CD4-positive, alpha-beta memory T cell (primary cell): ENCODE measurements at regions of chr2 and their contacts with region 1.

Region 1: GRCh38 chr2:143162123-143162837 is 33.1 kb downstream of the ARHGAP15 start:
- DNase-seq: peak; percentile 62 to 78 (median 71)
- H3K4me3 ChIP-seq: no peak overlapping the region
- H3K4me3 Mint-ChIP-seq: peak overlapping the region in 4 of 8 donors; percentile 1 to 27 (median 6)
- H3K27ac ChIP-seq: no peak overlapping the region
- H3K27ac Mint-ChIP-seq: peak overlapping the region; percentile 30 to 90 (median 78)
- H3K4me1 ChIP-seq: peaks cover 83% of the 10 kb centered on the region
- H3K4me1 Mint-ChIP-seq: peaks cover 70 to 92% (median 82%) of the 10 kb centered on the region in 4 donors
- H3K27me3 ChIP-seq: no peaks in the 10 kb centered on the region
- H3K27me3 Mint-ChIP-seq: no peaks in the 10 kb centered on the region

Region 2: GRCh38 chr2:142339261-142339660 is 823.0 kb before region 1 on chr2:
- CTCF ChIA-PET with region 1: no interaction called
- POLR2A ChIA-PET with region 1: no interaction called
- intact Hi-C with region 1: no loop called
- DNase-seq: no peak
- H3K4me3 ChIP-seq: no peak overlapping the region
- H3K4me3 Mint-ChIP-seq: no peak overlapping the region
- H3K27ac ChIP-seq: no peak overlapping the region
- H3K27ac Mint-ChIP-seq: no peak overlapping the region
- H3K4me1 ChIP-seq: no peaks in the 10 kb centered on the region
- H3K4me1 Mint-ChIP-seq: no peaks in the 10 kb centered on the region
- H3K27me3 ChIP-seq: no peaks in the 10 kb centered on the region
- H3K27me3 Mint-ChIP-seq: no peaks in the 10 kb centered on the region

Region 3: GRCh38 chr2:142903780-142904179 is 258.5 kb before region 1 on chr2:
- CTCF ChIA-PET with region 1: no interaction called
- POLR2A ChIA-PET with region 1: no interaction called
- intact Hi-C with region 1: no loop called
- DNase-seq: no peak
- H3K4me3 ChIP-seq: no peak overlapping the region
- H3K4me3 Mint-ChIP-seq: no peak overlapping the region
- H3K27ac ChIP-seq: no peak overlapping the region
- H3K27ac Mint-ChIP-seq: no peak overlapping the region
- H3K4me1 ChIP-seq: no peaks in the 10 kb centered on the region
- H3K4me1 Mint-ChIP-seq: no peaks in the 10 kb centered on the region
- H3K27me3 ChIP-seq: no peaks in the 10 kb centered on the region
- H3K27me3 Mint-ChIP-seq: peaks cover 1 to 4% of the 10 kb centered on the region in 2 donors

Region 4: GRCh38 chr2:142946941-142947340 is 215.3 kb before region 1 on chr2:
- CTCF ChIA-PET with region 1: no interaction called
- POLR2A ChIA-PET with region 1: no interaction called
- intact Hi-C with region 1: no loop called
- DNase-seq: no peak
- H3K4me3 ChIP-seq: no peak overlapping the region
- H3K4me3 Mint-ChIP-seq: no peak overlapping the region
- H3K27ac ChIP-seq: no peak overlapping the region
- H3K27ac Mint-ChIP-seq: no peak overlapping the region
- H3K4me1 ChIP-seq: no peaks in the 10 kb centered on the region
- H3K4me1 Mint-ChIP-seq: no peaks in the 10 kb centered on the region
- H3K27me3 ChIP-seq: no peaks in the 10 kb centered on the region
- H3K27me3 Mint-ChIP-seq: peaks cover 7 to 8% of the 10 kb centered on the region in 2 donors

Region 5: DNA sequence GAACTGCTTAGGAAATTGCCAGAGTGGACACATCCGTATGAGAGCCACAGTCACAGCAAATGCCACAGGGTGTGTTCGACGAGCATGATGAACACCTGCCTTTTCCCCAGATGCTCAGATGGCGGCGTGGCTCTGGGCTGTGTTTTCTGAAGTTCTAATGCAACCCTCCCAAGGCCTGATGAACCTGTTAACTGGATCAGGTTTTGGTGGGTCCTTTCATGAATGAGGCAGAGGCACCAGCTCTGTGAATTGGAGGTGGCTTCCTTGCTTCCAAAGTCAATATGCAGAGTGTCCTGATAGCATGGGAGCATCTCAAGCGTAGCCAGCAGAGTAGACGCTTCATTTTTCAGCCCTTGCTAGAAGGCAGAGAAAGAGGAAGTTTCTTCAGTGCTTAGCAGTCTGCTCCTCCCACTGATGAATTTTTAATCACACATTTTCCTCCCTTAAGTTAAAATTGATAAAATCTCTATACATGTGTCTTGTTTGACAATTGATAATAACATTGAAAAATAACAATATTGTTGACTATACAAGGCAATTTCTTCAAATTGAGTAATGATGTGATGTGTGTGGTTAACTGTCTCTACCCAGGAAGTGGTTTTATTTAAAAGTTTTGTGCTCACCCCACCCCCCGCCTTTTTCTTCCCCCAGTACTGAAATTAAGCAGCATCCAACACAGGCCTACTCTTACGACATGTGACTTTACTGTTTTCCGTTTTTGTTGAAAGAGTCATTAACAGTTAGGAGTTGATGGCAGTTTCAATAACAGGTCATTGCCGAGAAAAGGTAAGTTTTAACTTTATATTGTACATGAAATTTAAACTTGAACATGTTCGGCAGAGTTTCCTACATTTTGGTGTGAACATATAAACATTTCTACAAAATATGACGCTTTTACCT is 33.3 kb before region 1 on chr2 and contains the start of gene ARHGAP15:
- CTCF ChIA-PET with region 1: interaction called, 33 read pairs
- POLR2A ChIA-PET with region 1: interaction called, 17 read pairs
- intact Hi-C with region 1: loop called (anchors 1 kb)
- DNase-seq: peak; percentile 80 to 90 (median 84)
- H3K4me3 ChIP-seq: peak within 1 kb of the TSS; percentile 64 to 87
- H3K4me3 Mint-ChIP-seq: peak within 1 kb of the TSS; percentile 79 to 92 (median 89)
- H3K27ac ChIP-seq: peak within 1 kb of the TSS; percentile 70
- H3K27ac Mint-ChIP-seq: peak within 1 kb of the TSS; percentile 73 to 98 (median 96)
- H3K4me1 ChIP-seq: peaks cover 76% of the 10 kb centered on the region
- H3K4me1 Mint-ChIP-seq: peaks cover 31 to 42% (median 34%) of the 10 kb centered on the region in 4 donors
- H3K27me3 ChIP-seq: no peaks in the 10 kb centered on the region
- H3K27me3 Mint-ChIP-seq: no peaks in the 10 kb centered on the region
- total RNA-seq, gene ARHGAP15: 218 to 225 TPM

Region 6: GRCh38 chr2:143150287-143150686 is 12.0 kb before region 1 on chr2:
- CTCF ChIA-PET with region 1: interaction called, 38 read pairs
- POLR2A ChIA-PET with region 1: interaction called, 5 read pairs
- intact Hi-C with region 1: no loop called
- DNase-seq: no peak
- H3K4me3 ChIP-seq: no peak overlapping the region
- H3K4me3 Mint-ChIP-seq: peak overlapping the region in 7 of 8 donors; percentile 39 to 78 (median 66)
- H3K27ac ChIP-seq: peak overlapping the region; percentile 45
- H3K27ac Mint-ChIP-seq: peak overlapping the region; percentile 57 to 94 (median 88)
- H3K4me1 ChIP-seq: peaks cover 93% of the 10 kb centered on the region
- H3K4me1 Mint-ChIP-seq: peaks cover 71 to 91% (median 81%) of the 10 kb centered on the region in 4 donors
- H3K27me3 ChIP-seq: no peaks in the 10 kb centered on the region
- H3K27me3 Mint-ChIP-seq: no peaks in the 10 kb centered on the region

Region 7: DNA sequence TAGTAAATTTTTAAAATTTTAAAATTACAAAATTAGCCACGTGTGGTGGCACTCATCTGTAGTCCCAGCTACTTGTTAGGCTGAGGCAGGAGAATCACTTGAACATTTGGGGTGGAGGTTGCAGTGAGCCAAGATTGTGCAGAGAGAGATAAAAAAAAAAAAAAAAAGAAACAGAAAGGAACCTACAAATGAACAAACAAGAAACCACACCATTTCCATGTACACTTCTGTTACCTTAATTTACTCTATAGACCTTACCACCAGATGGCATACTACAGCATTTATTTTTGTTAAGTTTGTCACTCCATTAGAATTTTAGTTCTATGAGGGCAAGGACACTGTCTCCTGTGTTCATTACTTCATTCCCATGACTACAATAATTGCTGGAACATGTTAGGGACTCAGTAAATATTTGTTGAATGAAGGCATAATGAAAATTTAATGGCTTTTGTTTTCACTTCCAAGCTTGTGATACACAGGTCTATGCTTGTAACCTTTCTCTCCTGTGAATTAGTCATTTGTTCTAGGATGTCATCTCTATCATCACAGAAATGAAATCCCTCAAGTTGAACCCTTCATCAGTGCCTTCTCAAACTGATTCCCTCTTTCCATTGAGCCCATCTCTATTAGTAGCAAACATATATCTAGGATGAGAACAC is 43.0 kb after region 1 on chr2:
- CTCF ChIA-PET with region 1: interaction called, 21 read pairs
- POLR2A ChIA-PET with region 1: no interaction called
- intact Hi-C with region 1: loop called (anchors 2 kb)
- DNase-seq: peak in 4 of 5 donors; percentile 54 to 60 (median 57)
- H3K4me3 ChIP-seq: no peak overlapping the region
- H3K4me3 Mint-ChIP-seq: peak overlapping the region in 4 of 8 donors; percentile 16 to 64 (median 34)
- H3K27ac ChIP-seq: no peak overlapping the region
- H3K27ac Mint-ChIP-seq: peak overlapping the region in 5 of 7 donors; percentile 39 to 77 (median 67)
- H3K4me1 ChIP-seq: peaks cover 42% of the 10 kb centered on the region
- H3K4me1 Mint-ChIP-seq: peaks cover 55 to 66% (median 57%) of the 10 kb centered on the region in 4 donors
- H3K27me3 ChIP-seq: no peaks in the 10 kb centered on the region
- H3K27me3 Mint-ChIP-seq: no peaks in the 10 kb centered on the region

Region 8: GRCh38 chr2:143223556-143223955 is 61.3 kb after region 1 on chr2:
- CTCF ChIA-PET with region 1: interaction called, 62 read pairs
- POLR2A ChIA-PET with region 1: interaction called, 6 read pairs
- intact Hi-C with region 1: loop called (anchors 1 kb)
- DNase-seq: no peak
- H3K4me3 ChIP-seq: no peak overlapping the region
- H3K4me3 Mint-ChIP-seq: peak overlapping the region in 2 of 8 donors; percentile 20 to 34
- H3K27ac ChIP-seq: no peak overlapping the region
- H3K27ac Mint-ChIP-seq: peak overlapping the region in 4 of 7 donors; percentile 63 to 75 (median 70)
- H3K4me1 ChIP-seq: peaks cover 70% of the 10 kb centered on the region
- H3K4me1 Mint-ChIP-seq: peaks cover 44 to 69% (median 58%) of the 10 kb centered on the region in 4 donors
- H3K27me3 ChIP-seq: no peaks in the 10 kb centered on the region
- H3K27me3 Mint-ChIP-seq: no peaks in the 10 kb centered on the region

Region 9: GRCh38 chr2:143284087-143284675 is 121.9 kb after region 1 on chr2:
- CTCF ChIA-PET with region 1: interaction called, 27 read pairs
- POLR2A ChIA-PET with region 1: no interaction called
- intact Hi-C with region 1: loop called (anchors 1 kb)
- DNase-seq: peak; percentile 31 to 46 (median 35)
- H3K4me3 ChIP-seq: no peak overlapping the region
- H3K4me3 Mint-ChIP-seq: peak overlapping the region in 1 of 8 donors; percentile 32
- H3K27ac ChIP-seq: no peak overlapping the region
- H3K27ac Mint-ChIP-seq: peak overlapping the region; percentile 18 to 83 (median 53)
- H3K4me1 ChIP-seq: peaks cover 26% of the 10 kb centered on the region
- H3K4me1 Mint-ChIP-seq: peaks cover 42 to 82% (median 57%) of the 10 kb centered on the region in 4 donors
- H3K27me3 ChIP-seq: no peaks in the 10 kb centered on the region
- H3K27me3 Mint-ChIP-seq: no peaks in the 10 kb centered on the region

Region 10: GRCh38 chr2:143321994-143322393 is 159.7 kb after region 1 on chr2:
- CTCF ChIA-PET with region 1: no interaction called
- POLR2A ChIA-PET with region 1: no interaction called
- intact Hi-C with region 1: no loop called
- DNase-seq: peak in 2 of 5 donors; percentile 5 to 18
- H3K4me3 ChIP-seq: no peak overlapping the region
- H3K4me3 Mint-ChIP-seq: peak overlapping the region in 5 of 8 donors; percentile 14 to 63 (median 50)
- H3K27ac ChIP-seq: no peak overlapping the region
- H3K27ac Mint-ChIP-seq: peak overlapping the region in 4 of 7 donors; percentile 44 to 60 (median 50)
- H3K4me1 ChIP-seq: peaks cover 40% of the 10 kb centered on the region
- H3K4me1 Mint-ChIP-seq: peaks cover 48 to 91% (median 74%) of the 10 kb centered on the region in 4 donors
- H3K27me3 ChIP-seq: no peaks in the 10 kb centered on the region
- H3K27me3 Mint-ChIP-seq: no peaks in the 10 kb centered on the region